ENCODE measurements at regions of chr1 and their contacts with region 1.

Region 1: GRCh38 chr1:40240390-40240789 is 7.3 kb upstream of the TMCO2 start:
- DNase-seq: no peak
- H3K4me3 ChIP-seq: no peak overlapping the region
- H3K27ac ChIP-seq: no peak overlapping the region
- H3K4me1 ChIP-seq: no peaks in the 10 kb centered on the region
- H3K27me3 ChIP-seq: no peaks in the 10 kb centered on the region
- CTCF ChIP-seq: no peak

Region 2: DNA sequence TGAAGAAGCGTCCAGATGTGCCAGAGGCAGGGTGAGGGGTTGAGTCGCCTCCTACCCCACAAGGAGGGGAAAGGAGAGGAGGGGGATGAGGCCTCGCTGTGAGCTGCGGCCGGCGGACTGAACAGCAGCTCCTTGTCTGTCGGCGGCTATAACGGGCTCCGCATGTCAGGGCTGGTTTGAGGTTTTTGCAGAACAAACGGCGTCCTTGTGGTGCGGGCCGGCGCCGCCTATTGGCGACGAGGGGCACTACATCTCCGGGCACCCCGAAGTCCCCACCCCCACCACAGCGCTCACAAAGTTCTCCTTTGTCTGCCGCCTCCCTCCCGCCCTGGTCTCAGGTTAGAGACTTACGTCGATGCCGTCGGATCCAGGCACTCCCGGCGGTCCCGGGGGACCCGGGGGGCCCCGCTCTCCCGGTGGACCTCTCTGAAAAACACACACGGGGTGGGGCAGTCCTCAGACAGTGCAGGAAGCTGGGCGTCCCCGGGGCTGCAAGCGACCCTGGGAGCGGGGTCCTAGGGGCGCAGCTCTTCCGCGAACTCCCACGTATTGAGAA is 74.9 kb after region 1 on chr1:
- CTCF ChIA-PET with region 1: no interaction called
- POLR2A ChIA-PET with region 1: interaction called, 19 read pairs
- intact Hi-C with region 1: no loop called
- DNase-seq: peak; percentile 92
- H3K4me3 ChIP-seq: peak overlapping the region; percentile 56
- H3K27ac ChIP-seq: peak overlapping the region; percentile 43
- H3K4me1 ChIP-seq: peaks cover 12% of the 10 kb centered on the region
- H3K27me3 ChIP-seq: no peaks in the 10 kb centered on the region
- CTCF ChIP-seq: peak; percentile 90